ENCODE measurements at regions of chr17 and their contacts with region 1.

Region 1: GRCh38 chr17:69501591-69502468 is 87.3 kb downstream of the MAP2K6 start:
- DNase-seq: peak in 2 of 3 donors; percentile 40 to 67
- ATAC-seq: peak; percentile 83
- H3K4me3 ChIP-seq: no peak overlapping the region
- H3K4me1 ChIP-seq: peaks cover 6% of the 10 kb centered on the region
- CTCF ChIP-seq: no peak

Region 2: DNA sequence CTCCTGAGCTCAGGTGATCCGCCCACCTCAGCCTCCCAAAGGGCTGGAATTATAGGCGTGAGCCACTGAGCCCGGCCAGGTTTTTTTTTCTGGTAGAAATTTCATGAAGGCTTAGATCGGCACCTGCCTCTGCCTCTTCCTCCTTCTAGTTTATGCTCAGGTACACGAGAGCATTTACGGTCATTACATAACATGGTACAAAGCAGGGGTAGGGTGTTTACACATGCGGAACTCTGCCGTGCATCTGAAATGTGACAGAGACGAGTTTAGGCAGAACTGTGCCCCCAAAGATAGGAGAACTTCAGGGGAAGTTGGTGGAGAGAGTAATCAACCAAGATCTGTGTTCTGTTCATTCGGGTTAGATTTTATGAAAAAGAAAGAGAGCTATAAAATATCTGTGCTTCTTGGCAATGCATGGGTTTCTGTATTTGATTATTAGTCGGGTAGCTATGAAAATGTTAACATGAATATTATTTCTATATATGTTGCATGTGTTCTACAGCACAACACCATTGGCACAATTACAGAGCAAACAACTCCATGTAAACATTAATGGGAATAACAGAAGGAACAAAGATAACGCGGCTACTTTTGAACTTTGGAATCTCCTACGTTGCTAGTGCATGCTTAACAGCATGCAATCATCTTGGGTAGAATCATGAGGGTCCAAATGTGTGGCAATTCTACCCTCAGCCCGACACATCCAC is 110.9 kb before region 1 on chr17:
- intact Hi-C with region 1: loop called in 1 of 2 experiments (anchors 10 kb)
- DNase-seq: peak in 2 of 3 donors; percentile 37 to 39
- ATAC-seq: peak; percentile 79
- H3K4me3 ChIP-seq: no peak overlapping the region
- H3K4me1 ChIP-seq: no peaks in the 10 kb centered on the region
- CTCF ChIP-seq: no peak

Region 3: GRCh38 chr17:69428254-69428980 is 73.4 kb before region 1 on chr17:
- intact Hi-C with region 1: loop called in 1 of 2 experiments (anchors 10 kb)
- DNase-seq: peak in 1 of 3 donors; percentile 72
- ATAC-seq: peak; percentile 79
- H3K4me3 ChIP-seq: no peak overlapping the region
- H3K4me1 ChIP-seq: peaks cover 34% of the 10 kb centered on the region
- CTCF ChIP-seq: no peak

Region 4: DNA sequence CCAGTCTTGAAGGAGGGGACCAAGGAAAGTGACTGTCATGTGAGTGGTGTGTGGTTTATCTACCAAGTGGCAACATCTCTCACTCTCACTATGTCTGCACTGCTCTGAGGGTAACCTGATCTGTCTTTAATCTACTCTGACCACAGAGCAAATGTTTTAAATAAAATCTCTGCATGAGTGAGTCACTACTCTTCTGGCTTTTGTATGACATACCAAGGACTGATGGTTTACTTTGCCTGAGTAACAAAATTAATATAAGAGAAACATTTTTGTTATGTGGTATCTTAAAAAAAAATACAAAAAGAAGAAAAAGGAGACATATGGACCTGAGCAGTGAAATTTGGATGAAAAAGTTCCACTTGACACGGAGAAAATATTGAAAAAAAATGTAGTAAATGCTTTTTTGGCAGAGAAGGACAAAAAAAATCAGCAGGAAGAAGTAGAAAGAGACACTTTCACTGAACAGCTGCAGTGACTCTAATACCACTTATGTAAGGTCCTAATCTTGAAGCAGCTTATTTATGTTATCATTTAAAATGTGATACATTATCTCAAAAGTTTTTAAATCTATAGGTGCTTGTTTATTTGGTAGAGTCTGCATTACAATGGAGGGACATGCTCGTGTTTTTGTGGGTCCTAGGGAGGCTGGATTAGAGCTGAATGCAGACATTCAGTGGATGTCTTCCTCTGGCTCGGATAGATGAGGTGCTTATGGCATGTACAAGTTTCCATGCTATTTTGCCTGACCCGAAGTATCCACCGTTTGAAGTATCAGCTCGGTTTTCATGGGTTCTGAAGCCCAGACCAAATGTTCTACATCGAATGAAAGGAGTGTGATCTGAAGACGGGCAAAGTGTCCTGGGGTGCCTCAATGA is 153.4 kb after region 1 on chr17:
- intact Hi-C with region 1: no loop called
- DNase-seq: no peak
- ATAC-seq: no peak
- H3K4me3 ChIP-seq: no peak overlapping the region
- H3K4me1 ChIP-seq: no peaks in the 10 kb centered on the region
- CTCF ChIP-seq: no peak